Activated CD4-positive, alpha-beta T cell treated with anti-CD3 and anti-CD28 coated beads for 36 hours (primary cell): ENCODE measurements at regions of chr22 and their contacts with region 1.

Region 1: DNA sequence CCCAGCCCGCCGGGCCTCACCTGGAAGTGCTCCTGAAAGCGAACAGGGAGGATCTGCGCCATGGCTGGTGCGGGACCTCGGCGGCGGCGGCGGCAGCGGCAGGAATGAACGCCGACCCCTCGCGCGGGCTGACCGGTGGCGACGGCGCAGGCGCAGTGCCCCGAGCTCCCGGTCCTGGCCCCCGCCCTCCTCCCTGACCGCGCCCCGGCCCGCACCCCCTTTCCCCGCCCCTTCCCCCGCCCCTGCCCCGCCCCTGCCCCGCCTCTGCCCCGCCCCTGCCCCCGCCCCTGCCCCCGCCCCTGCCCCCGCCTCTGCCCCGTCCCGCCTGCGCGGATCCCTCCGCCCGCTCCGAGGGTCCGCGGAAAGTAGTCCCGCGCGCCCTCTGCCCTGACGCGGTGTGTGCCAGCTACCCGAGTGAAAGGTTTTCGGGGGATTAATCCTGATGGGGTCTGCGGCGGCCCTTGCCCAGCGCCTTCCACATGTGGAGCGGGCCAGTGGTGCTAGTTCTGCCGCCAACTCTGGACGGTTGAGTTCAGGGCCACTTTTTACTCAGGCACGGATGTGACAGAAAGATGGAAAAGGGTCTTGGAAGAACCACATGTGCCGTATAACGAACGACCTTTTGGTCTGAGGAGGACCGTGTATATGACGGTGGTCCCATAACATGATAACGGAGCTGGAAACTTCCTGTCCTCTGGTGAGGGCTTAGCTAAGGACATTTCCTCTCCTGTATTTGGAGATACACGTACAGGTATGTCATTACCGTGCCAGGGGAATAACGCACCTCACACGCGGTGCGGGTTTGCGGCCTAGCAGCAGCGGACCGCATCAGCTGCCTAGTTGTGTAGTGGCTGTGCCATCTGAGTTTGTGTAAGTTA is at the start of gene CLTCL1:
- DNase-seq: peak; percentile 85
- ATAC-seq: peak; percentile 75
- H3K4me3 Mint-ChIP-seq: peak within 1 kb of the TSS; percentile 87
- H3K27ac Mint-ChIP-seq: peak within 1 kb of the TSS; percentile 65
- H3K4me1 Mint-ChIP-seq: peaks cover 12% of the 10 kb centered on the region
- H3K27me3 Mint-ChIP-seq: peaks cover 24% of the 10 kb centered on the region
- total RNA-seq, gene CLTCL1: 0.76 to 1.2 TPM

Region 2: DNA sequence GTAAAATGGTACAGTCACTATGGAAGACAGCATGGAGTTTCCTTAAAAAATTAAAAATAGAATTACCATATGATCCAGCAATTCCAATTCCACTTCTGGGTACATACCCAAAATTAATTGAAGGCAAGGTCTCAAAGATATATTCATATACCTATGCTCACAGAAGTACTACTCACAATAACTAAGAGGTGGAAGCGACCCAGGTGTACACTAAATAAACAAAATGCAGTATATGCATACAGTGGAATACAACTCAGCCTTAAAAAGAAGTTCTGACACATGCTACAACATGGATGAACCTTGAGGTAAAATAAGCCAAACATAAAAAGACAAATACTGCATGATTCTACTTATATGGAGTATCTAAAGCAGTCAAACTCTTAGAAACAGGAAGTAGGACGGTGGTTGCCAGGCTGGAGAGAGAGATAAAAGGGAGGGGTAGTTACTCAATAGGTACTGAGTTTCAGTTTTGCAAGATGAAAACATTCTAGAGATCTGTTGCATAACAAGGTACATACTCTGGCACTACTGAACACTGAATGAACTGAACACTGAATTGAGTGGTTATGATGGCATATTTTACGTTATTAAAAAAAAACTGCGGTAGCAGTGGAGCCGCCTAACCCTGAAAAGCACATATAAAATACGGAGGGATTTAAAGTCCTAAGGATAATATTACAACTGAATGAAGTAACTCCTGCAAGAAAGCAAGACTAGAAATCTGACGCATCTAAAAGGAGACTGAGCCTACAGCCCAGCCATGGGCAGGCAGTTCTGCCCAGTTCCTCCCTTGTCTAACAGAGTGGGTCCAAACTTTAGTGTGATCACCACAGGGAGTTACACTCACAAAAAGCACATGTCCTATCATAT is 182.4 kb before region 1 on chr22:
- CTCF ChIA-PET with region 1: interaction called, 3 read pairs
- POLR2A ChIA-PET with region 1: no interaction called
- intact Hi-C with region 1: loop called (anchors 5 to 10 kb)
- DNase-seq: peak; percentile 70
- ATAC-seq: peak; percentile 94
- H3K4me3 Mint-ChIP-seq: peak overlapping the region; percentile 5
- H3K27ac Mint-ChIP-seq: peak overlapping the region; percentile 72
- H3K4me1 Mint-ChIP-seq: peaks cover 68% of the 10 kb centered on the region
- H3K27me3 Mint-ChIP-seq: no peaks in the 10 kb centered on the region

Region 3: DNA sequence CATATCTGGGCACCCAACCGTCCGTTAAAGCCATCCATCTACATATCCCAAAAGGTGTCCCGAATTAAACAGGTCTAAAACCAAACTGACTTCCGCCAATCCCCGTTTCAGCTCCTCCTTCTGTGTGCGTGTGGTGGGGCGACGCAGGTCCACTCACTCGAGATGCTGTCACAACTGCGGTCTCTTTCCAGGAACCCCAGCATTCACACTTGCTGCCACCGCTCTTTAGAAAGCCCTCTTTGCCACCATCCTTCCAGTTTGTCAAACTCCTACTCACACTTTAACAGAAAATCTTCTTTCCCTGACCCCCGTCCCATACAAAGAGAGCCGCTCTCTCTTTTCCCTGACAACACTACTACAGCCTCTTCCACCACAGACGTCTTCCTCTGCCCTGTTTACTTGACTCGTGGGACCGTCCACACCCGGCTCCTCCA is 147.8 kb before region 1 on chr22:
- CTCF ChIA-PET with region 1: interaction called, 4 read pairs
- POLR2A ChIA-PET with region 1: no interaction called
- intact Hi-C with region 1: loop called in 1 of 2 experiments (anchors 1 kb)
- DNase-seq: peak; percentile 69
- ATAC-seq: peak; percentile 37
- H3K4me3 Mint-ChIP-seq: peak overlapping the region; percentile 95
- H3K27ac Mint-ChIP-seq: peak overlapping the region; percentile 96
- H3K4me1 Mint-ChIP-seq: peaks cover 18% of the 10 kb centered on the region
- H3K27me3 Mint-ChIP-seq: peaks cover 5% of the 10 kb centered on the region

Region 4: DNA sequence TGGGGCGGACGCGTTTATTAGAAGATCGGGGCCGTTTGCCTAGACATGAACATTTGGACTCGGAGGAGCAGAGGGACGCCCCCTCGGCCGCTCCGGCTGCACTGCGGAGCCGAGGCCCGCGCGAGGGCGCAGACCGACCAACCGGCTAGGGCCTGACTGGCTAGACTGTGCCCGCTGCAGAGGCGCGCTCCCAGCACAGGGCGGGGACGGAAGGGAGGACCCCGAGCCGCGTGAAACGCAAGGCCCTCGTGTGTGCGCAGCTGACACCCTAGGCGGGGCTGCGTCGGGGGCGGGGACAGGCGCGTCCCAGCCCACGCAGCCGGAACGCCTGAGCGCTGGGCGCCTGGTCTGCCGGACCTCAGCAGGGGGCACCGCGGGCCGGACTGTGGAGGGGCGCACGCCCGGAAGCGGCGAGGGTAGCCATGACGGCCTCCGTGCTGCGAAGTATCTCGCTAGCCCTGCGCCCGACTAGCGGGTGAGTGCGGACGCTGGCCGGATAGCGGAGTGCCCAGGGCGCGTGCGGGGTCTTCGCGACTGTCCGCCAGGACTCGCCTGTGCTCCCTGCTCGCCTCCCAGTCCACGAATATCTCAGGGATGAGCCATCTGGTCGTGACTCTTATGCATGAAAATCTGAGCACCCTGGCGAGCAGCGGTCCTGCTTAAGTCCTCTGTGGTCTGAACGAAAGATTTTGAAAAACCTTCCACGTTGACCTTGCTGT is 140.5 kb after region 1 on chr22 and contains the start of gene MRPL40:
- CTCF ChIA-PET with region 1: no interaction called
- POLR2A ChIA-PET with region 1: no interaction called
- intact Hi-C with region 1: loop called in 1 of 2 experiments (anchors 1 kb)
- DNase-seq: peak; percentile 94
- ATAC-seq: peak; percentile 86
- H3K4me3 Mint-ChIP-seq: peak within 1 kb of the TSS; percentile 75
- H3K27ac Mint-ChIP-seq: peak within 1 kb of the TSS; percentile 96
- H3K4me1 Mint-ChIP-seq: peaks cover 43% of the 10 kb centered on the region
- H3K27me3 Mint-ChIP-seq: no peaks in the 10 kb centered on the region
- total RNA-seq, gene MRPL40: 34.1 to 34.4 TPM

Region 5: DNA sequence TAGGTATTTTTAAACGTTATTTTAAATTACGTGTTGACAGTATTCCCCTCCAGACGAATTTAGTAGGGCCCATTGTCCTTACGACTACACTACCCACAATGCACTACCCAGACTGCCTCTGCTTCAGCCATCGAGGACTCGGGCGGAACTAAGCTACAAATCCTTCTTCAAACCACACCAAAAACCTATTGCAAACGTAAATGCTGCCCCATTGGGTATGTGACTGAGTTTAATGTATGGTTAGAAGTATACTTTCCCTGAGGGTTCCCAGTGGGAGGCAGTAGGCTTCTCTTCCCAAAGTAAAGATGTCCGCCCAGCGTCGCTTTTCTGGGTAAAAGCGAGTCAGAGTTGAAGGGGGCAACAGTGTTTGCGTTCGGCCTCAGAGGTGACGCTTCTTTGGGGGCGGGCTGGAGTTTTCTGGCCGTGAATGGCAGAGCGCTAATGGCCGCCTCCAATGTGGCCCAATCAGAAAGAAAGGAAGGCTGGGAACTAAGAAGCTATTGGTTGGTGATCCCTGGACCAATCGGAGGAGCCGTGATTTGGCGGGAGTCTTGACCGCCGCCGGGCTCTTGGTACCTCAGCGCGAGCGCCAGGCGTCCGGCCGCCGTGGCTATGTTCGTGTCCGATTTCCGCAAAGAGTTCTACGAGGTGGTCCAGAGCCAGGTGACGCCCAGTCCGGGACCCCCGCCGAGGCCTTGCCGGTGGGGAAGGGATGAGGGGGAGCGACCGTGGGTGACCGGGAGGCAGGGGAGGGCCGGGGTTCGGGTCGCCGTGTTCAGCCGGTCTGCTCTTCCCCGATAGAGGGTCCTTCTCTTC is 187.7 kb after region 1 on chr22 and contains the start of gene CDC45:
- CTCF ChIA-PET with region 1: no interaction called
- POLR2A ChIA-PET with region 1: no interaction called
- intact Hi-C with region 1: loop called (anchors 1 to 5 kb)
- DNase-seq: peak; percentile 97
- ATAC-seq: peak; percentile 91
- H3K4me3 Mint-ChIP-seq: peak within 1 kb of the TSS; percentile 99
- H3K27ac Mint-ChIP-seq: peak within 1 kb of the TSS; percentile 99
- H3K4me1 Mint-ChIP-seq: peaks cover 45% of the 10 kb centered on the region
- H3K27me3 Mint-ChIP-seq: no peaks in the 10 kb centered on the region
- total RNA-seq, gene CDC45: 103 to 111 TPM

Region 6: DNA sequence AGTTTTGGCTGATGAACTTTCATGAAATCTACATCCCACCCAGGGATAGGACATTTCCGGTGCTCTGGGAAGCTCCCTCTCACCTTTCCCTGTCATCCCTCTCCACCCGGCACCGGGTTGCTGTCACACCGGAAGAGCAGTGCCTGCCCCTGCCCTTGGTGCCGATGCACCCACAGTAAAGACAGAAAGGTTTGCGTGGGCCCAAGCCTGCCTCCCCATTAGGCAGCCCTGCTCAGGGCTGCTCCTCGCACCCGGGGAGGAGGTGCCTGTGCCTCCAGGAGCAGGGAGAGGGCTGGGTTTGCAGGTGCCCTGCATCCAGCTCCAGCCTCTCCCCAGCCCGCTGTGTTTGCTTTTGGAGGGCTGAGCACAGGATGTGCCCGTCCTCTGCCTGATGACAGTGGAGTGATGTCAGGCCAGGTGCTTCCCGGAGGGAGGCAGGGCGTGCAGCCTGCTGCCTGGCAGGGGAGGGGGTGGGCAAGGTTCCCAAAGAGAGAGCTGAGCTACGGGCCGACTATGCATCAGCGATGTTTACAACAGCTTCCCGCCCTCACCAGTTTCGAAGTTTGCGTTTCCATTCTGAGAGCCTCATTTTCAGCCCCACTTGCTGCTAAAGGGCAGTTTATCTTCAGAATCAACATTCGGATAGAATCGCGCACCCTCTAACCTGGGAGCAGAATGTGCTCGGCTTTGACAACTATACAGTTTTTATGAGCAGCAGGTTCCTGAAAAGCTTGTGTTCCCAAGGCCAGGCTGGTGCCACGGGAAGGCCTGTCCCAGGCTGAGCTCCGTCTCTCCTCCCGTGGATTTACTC is 315.6 kb after region 1 on chr22:
- CTCF ChIA-PET with region 1: no interaction called
- POLR2A ChIA-PET with region 1: no interaction called
- intact Hi-C with region 1: no loop called
- DNase-seq: peak; percentile 85
- ATAC-seq: peak; percentile 80
- H3K4me3 Mint-ChIP-seq: peak overlapping the region; percentile 50
- H3K27ac Mint-ChIP-seq: peak overlapping the region; percentile 82
- H3K4me1 Mint-ChIP-seq: peaks cover 64% of the 10 kb centered on the region
- H3K27me3 Mint-ChIP-seq: no peaks in the 10 kb centered on the region

Region 7: GRCh38 chr22:19891317-19892256 is 599.8 kb after region 1 on chr22:
- CTCF ChIA-PET with region 1: no interaction called
- POLR2A ChIA-PET with region 1: no interaction called
- intact Hi-C with region 1: loop called in 1 of 2 experiments (anchors 5 kb)
- DNase-seq: peak; percentile 92
- ATAC-seq: peak; percentile 75
- H3K4me3 Mint-ChIP-seq: peak overlapping the region; percentile 72
- H3K27ac Mint-ChIP-seq: peak overlapping the region; percentile 95
- H3K4me1 Mint-ChIP-seq: peaks cover 86% of the 10 kb centered on the region
- H3K27me3 Mint-ChIP-seq: no peaks in the 10 kb centered on the region